ENCODE measurements at regions of chr3 and their contacts with region 1.

Region 1: GRCh38 chr3:127574880-127575878 is 15.4 kb downstream of the TPRA1 start:
- DNase-seq: peak; percentile 74 to 88
- H3K4me3 ChIP-seq: no peak overlapping the region
- H3K27ac ChIP-seq: no peak overlapping the region
- H3K4me1 ChIP-seq: no peaks in the 10 kb centered on the region
- H3K27me3 ChIP-seq: no peaks in the 10 kb centered on the region
- CTCF ChIP-seq: peak; percentile 98

Region 2: DNA sequence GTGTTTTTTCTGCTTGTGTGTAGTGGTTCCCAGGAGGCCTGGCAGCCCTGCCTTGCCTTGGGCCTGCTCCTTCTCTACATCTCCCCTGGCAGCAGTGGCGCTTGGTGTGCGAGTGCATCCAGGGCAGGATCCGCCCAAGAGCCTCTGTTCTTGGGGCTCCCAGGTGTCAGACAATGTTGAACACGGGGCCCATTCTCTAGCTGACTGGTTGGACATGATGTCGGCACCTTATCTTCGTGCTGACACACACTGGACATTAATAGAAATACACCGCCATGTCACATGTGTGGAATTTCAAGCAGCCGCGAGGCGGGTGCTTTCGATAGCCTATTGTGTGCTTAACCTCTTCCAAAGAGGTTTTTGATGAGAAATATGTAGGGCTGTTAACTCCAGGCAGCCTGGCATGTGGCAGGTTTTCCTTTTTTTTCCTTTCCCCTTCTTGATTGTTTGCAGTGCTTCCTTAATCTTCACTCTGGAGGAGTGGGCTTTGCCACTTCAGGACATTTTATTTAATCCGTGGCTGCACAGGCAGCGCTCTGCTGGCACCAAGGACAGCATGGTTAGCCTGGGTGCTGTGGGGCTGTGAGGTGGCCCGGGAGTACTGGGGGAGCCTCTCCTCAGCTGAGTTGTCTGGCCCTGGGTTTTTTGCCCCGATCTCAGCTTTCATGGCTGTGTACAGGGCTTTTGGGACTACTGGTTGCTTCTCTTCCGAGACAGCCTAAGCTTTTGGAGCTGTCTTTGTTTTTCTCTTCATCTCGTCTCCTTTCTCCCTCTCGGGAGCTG is 828.6 kb before region 1 on chr3:
- CTCF ChIA-PET with region 1: interaction called, 20 read pairs
- POLR2A ChIA-PET with region 1: no interaction called
- intact Hi-C with region 1: no loop called
- DNase-seq: peak in 1 of 2 experiments; percentile 66
- H3K4me3 ChIP-seq: no peak overlapping the region
- H3K27ac ChIP-seq: no peak overlapping the region
- H3K4me1 ChIP-seq: no peaks in the 10 kb centered on the region
- H3K27me3 ChIP-seq: no peaks in the 10 kb centered on the region
- CTCF ChIP-seq: no peak

Region 3: DNA sequence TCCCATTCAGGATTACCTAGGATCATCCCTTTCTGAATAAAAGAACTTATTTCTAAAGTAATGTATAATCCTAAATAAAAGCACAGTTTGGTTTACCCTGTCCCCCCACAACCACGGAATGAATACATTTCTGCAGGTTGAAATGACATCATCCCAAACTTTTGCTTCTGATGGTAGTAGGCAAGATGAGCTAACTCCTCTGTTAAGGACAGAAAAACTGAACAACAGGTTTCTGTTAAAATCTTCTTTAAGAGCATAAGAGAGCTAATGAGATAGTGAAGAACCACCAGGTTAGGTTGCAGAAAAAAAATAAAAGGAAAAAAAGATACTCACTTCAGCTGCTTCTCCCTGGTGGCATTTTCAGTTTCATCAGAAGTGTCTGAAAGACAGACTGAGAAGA is 75.8 kb before region 1 on chr3:
- CTCF ChIA-PET with region 1: no interaction called
- POLR2A ChIA-PET with region 1: no interaction called
- intact Hi-C with region 1: no loop called
- DNase-seq: no peak
- H3K4me3 ChIP-seq: no peak overlapping the region
- H3K27ac ChIP-seq: no peak overlapping the region
- H3K4me1 ChIP-seq: no peaks in the 10 kb centered on the region
- H3K27me3 ChIP-seq: peaks cover 18% of the 10 kb centered on the region
- CTCF ChIP-seq: no peak

Region 4: DNA sequence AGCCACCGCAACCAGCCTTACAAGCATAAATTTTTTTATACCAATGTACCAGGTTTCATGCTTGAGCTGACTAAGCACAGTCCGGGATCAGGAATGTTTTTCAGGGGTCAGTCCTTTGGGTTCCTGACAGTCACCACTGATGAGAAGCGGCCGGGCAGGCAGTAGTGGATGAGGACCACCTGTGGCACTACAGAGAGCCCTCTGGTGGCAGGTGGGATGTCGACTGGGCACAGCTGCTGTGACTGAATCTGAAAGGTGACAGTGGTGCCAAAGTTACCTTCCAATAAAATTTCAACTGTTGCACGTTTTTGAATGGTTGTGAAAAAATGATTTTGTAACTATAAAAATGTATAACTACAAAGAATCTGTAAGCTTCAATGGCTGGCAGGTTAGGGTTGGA is 18.6 kb before region 1 on chr3:
- CTCF ChIA-PET with region 1: interaction called, 13 read pairs
- POLR2A ChIA-PET with region 1: no interaction called
- intact Hi-C with region 1: no loop called
- DNase-seq: no peak
- H3K4me3 ChIP-seq: no peak overlapping the region
- H3K27ac ChIP-seq: no peak overlapping the region
- H3K4me1 ChIP-seq: no peaks in the 10 kb centered on the region
- H3K27me3 ChIP-seq: no peaks in the 10 kb centered on the region
- CTCF ChIP-seq: no peak

Region 5: DNA sequence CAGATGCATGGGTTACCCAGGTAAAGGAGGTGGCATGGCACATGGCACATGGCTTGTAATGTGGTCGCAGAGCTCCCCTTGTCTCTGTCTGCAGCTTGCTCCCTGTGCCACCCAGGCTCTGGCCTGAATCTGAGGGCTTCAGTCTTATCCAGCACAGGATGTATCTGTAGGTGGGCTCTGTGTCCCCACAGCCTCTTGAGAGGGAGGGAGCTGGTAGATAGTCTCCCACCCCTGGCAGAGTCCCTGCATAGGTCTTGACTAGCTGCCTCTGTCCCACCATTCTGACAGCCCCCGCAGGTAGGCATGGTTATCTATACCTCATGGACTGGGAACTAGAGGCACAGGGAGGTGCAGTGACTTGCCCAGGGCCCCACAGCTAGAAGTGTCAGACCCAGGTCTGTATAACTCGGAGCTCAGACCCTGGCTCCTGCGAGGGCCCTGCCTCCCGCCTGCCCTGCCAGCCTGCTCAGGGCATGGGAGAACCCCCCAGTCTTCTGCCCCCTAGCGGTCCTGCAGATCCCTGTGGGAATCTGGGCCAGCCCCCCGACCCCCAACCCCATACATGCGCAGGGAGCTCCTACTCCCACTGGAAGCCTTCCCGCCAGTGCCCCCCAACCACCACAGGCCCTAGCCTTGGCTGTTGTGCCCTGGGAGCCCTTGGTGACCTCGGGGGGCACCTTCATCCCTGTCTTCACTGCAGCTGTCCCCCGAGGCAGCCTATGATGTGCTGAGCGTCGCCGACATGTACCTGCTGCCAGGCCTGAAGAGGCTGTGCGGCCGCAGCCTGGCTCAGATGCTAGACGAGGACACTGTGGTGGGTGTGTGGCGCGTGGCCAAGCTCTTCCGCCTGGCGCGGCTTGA is 104.3 kb after region 1 on chr3:
- CTCF ChIA-PET with region 1: no interaction called
- POLR2A ChIA-PET with region 1: no interaction called
- intact Hi-C with region 1: no loop called
- DNase-seq: no peak
- H3K4me3 ChIP-seq: no peak overlapping the region
- H3K27ac ChIP-seq: no peak overlapping the region
- H3K4me1 ChIP-seq: no peaks in the 10 kb centered on the region
- H3K27me3 ChIP-seq: no peaks in the 10 kb centered on the region
- CTCF ChIP-seq: no peak

Region 6: DNA sequence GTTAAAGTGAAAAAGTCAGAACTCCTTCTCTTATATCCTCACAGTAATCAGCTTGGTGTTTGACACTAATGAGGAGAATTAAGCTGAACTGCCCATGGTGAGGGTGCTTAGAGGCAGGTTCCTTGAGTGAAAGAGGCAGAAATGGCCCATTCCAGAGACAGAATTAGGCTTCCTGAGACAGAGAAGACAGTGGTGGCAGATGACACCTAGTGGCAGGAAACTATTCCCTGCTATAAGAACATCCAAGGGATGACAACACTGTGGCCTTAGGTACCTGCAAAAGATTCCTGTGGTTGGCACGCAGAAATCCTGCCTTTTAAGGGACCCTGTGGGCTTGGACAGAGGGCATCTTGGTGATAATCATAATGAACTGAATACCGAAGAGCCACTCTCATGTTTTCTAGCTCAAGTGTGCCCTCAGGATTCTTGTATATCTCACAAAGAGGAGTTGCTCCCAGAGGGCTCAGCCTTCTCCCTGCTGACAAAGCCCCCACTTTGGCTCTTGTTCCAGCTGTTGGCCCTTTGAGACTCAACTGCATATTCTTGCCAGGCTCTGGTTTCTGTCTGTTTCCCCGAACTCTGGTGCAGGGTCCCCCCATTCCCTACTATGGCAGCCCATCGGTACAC is 395.9 kb after region 1 on chr3:
- CTCF ChIA-PET with region 1: no interaction called
- POLR2A ChIA-PET with region 1: no interaction called
- intact Hi-C with region 1: loop called (anchors 5 kb)
- DNase-seq: peak; percentile 56 to 59
- H3K4me3 ChIP-seq: no peak overlapping the region
- H3K27ac ChIP-seq: no peak overlapping the region
- H3K4me1 ChIP-seq: no peaks in the 10 kb centered on the region
- H3K27me3 ChIP-seq: no peaks in the 10 kb centered on the region
- CTCF ChIP-seq: peak; percentile 81

Region 7: GRCh38 chr3:128051837-128052594 is 476.8 kb after region 1 on chr3 and contains the start of gene SEC61A1:
- CTCF ChIA-PET with region 1: no interaction called
- POLR2A ChIA-PET with region 1: no interaction called
- intact Hi-C with region 1: loop called (anchors 5 kb)
- DNase-seq: peak; percentile 78 to 98
- H3K4me3 ChIP-seq: peak within 1 kb of the TSS; percentile 99
- H3K27ac ChIP-seq: peak within 1 kb of the TSS; percentile 81
- H3K4me1 ChIP-seq: peaks cover 26% of the 10 kb centered on the region
- H3K27me3 ChIP-seq: no peaks in the 10 kb centered on the region
- CTCF ChIP-seq: no peak
- total RNA-seq, gene SEC61A1: 110 and 189 TPM in 2 replicates